ENCODE measurements at regions of chr16 and their contacts with region 1.

Region 1: DNA sequence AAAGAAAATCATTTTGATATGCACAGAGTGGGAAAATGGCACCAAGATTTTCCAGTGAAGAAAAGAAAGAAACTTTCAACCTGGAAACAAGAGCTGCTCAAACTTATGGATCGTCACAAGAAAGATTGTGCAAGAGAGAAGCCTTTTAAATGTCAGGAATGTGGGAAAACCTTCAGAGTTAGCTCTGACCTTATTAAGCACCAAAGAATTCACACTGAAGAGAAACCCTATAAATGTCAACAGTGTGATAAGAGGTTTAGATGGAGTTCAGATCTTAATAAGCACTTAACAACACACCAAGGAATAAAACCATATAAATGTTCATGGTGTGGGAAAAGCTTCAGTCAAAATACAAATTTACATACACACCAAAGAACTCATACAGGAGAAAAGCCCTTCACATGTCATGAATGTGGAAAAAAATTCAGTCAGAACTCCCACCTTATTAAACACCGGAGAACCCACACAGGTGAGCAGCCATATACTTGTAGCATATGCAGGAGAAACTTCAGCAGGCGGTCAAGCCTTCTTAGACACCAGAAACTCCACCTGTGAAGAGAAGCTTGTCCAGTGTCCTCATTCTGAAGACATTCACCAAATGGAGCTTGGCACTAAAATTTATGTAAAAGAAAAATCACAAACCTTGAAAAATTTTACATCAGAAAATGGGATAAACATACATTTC is 12.2 kb downstream of the ZNF75A start:
- DNase-seq: no peak
- H3K4me3 ChIP-seq: peak overlapping the region in 1 of 2 donors; percentile 17
- H3K4me3 Mint-ChIP-seq: no peak overlapping the region
- H3K27ac ChIP-seq: no peak overlapping the region
- H3K27ac Mint-ChIP-seq: no peak overlapping the region
- H3K4me1 ChIP-seq: no peaks in the 10 kb centered on the region
- H3K4me1 Mint-ChIP-seq: peaks cover 0 to 3% (median 0%) of the 10 kb centered on the region in 4 donors
- H3K27me3 ChIP-seq: no peaks in the 10 kb centered on the region
- H3K27me3 Mint-ChIP-seq: no peaks in the 10 kb centered on the region

Region 2: GRCh38 chr16:3305109-3306068 is 12.1 kb before region 1 on chr16 and contains the starts of genes TIGD7 and ZNF75A:
- CTCF ChIA-PET with region 1: interaction called, 10 read pairs
- POLR2A ChIA-PET with region 1: interaction called, 18 read pairs
- intact Hi-C with region 1: no loop called
- DNase-seq: peak; percentile 82 to 93 (median 85)
- H3K4me3 ChIP-seq: peak within 1 kb of the TSS; percentile 80 to 88
- H3K4me3 Mint-ChIP-seq: peak within 1 kb of the TSS; percentile 79 to 87 (median 85)
- H3K27ac ChIP-seq: peak within 1 kb of the TSS; percentile 70
- H3K27ac Mint-ChIP-seq: peak within 1 kb of the TSS; percentile 64 to 84 (median 82)
- H3K4me1 ChIP-seq: peaks cover 16% of the 10 kb centered on the region
- H3K4me1 Mint-ChIP-seq: peaks cover 7 to 13% (median 11%) of the 10 kb centered on the region in 4 donors
- H3K27me3 ChIP-seq: no peaks in the 10 kb centered on the region
- H3K27me3 Mint-ChIP-seq: no peaks in the 10 kb centered on the region
- total RNA-seq, gene TIGD7: 14.2 to 19.0 TPM
- total RNA-seq, gene ZNF75A: 82.7 to 88.1 TPM

Measured in CD4-positive, alpha-beta memory T cell (primary cell).